Aorta (tissue), 5 donors: ENCODE measurements at regions of chr17 and their contacts with region 1.

Region 1: DNA sequence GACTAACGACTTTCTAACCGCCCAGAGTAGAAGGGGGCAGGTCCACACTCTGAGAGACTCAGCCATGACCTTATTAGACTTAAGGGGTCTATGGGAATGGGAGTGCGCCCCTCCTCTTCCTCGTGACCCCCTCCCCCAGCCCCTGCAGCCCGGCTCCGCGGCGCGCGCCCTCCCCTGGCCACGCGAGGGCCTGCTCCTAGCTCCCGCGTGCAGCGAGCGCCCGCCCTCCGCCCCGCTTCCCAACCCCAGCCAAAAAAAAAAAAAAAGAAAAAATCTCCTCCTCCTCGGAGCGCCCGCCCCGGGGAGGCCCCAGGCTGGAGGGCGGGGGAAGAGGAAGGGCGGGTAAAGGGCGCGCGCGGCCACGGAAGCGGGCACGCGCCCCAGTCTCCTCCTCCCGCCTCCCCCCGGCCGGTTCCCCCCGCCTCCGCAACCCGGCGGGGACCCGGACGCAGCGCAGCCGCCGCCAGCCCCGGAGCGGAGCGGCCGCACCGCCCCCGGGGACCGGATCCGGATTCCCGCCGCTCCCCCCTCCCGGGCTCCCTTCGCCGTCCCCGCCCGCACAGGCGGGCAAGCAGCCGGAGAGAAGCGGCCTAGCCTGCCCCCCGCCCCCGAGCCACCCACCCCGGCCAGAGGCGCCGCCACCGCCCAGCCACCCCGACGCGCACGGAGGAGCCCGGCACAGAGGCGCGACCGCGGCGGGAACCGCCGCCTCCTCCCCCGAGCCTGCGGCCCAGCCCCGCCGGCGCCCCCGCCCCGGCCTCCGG is 949 bp downstream of the UBTF start:
- DNase-seq: peak; percentile 92 to 96
- ATAC-seq: peak; percentile 89
- H3K4me3 ChIP-seq: peak overlapping the region; percentile 90 to 98
- H3K27ac ChIP-seq: peak overlapping the region; percentile 90 to 99
- H3K4me1 ChIP-seq: peaks cover 0 to 2% of the 10 kb centered on the region in 2 donors
- H3K27me3 ChIP-seq: no peaks in the 10 kb centered on the region

Region 2: GRCh38 chr17:44086364-44087311 is 131.9 kb before region 1 on chr17:
- intact Hi-C with region 1: no loop called
- DNase-seq: no peak
- ATAC-seq: no peak
- H3K4me3 ChIP-seq: no peak overlapping the region
- H3K27ac ChIP-seq: no peak overlapping the region
- H3K4me1 ChIP-seq: no peaks in the 10 kb centered on the region
- H3K27me3 ChIP-seq: no peaks in the 10 kb centered on the region

Region 3: GRCh38 chr17:44199553-44200477 is 18.7 kb before region 1 on chr17 and contains the start of gene ATXN7L3:
- intact Hi-C with region 1: loop called in 1 of 2 experiments (anchors 2 kb)
- DNase-seq: peak; percentile 99 to 100
- ATAC-seq: peak; percentile 96
- H3K4me3 ChIP-seq: peak within 1 kb of the TSS; percentile 92 to 99
- H3K27ac ChIP-seq: peak within 1 kb of the TSS; percentile 80 to 84
- H3K4me1 ChIP-seq: no peaks in the 10 kb centered on the region
- H3K27me3 ChIP-seq: no peaks in the 10 kb centered on the region
- total RNA-seq, gene ATXN7L3: 62.9 to 67.5 TPM

Region 4: DNA sequence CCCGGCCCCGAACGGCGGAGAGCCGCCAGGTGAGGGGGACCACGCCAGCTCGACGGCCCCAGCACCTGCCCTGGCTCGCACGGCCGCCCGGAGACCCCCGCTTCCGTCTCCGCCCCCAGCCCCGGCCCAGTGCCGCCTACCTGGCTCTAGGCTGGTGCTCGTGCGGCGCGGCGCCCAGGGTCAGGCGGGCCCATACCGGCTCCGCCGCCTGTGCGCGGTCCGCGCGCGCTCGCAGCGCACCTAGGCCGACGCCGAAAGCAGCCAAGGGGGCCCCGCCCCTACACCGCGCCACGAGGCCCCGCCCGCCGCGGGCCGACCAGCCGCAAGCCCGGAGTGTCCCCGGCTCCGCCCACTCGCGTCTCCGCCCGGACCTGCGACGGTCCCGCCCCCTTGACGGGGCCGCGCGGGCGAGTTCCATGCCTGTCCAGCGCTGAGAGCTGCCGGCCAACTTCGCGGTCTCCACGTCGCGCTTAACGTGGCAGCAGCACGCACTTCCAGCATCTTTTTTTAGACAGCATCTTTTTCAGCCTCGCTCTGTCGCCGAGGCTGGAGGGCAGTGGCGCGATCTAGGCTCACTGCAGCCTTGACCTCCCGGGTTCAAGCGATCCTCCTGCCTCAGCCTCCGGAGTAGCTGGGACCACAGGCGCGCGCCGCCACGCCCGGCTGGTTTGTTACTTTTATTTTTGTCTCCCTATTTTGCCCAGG is 106.2 kb after region 1 on chr17 and contains the start of gene SLC25A39:
- intact Hi-C with region 1: loop called in 1 of 2 experiments (anchors 1 kb)
- DNase-seq: peak; percentile 97 to 98
- ATAC-seq: peak; percentile 97
- H3K4me3 ChIP-seq: peak within 1 kb of the TSS; percentile 65 to 75
- H3K27ac ChIP-seq: peak within 1 kb of the TSS; percentile 9 to 89
- H3K4me1 ChIP-seq: no peaks in the 10 kb centered on the region
- H3K27me3 ChIP-seq: no peaks in the 10 kb centered on the region
- total RNA-seq, gene SLC25A39: 50.2 to 61.5 TPM

Region 5: GRCh38 chr17:44331249-44331760 is 112.8 kb after region 1 on chr17:
- intact Hi-C with region 1: loop called in 1 of 2 experiments (anchors 2 kb)
- DNase-seq: no peak
- ATAC-seq: no peak
- H3K4me3 ChIP-seq: no peak overlapping the region
- H3K27ac ChIP-seq: no peak overlapping the region
- H3K4me1 ChIP-seq: no peaks in the 10 kb centered on the region
- H3K27me3 ChIP-seq: no peaks in the 10 kb centered on the region

Region 6: DNA sequence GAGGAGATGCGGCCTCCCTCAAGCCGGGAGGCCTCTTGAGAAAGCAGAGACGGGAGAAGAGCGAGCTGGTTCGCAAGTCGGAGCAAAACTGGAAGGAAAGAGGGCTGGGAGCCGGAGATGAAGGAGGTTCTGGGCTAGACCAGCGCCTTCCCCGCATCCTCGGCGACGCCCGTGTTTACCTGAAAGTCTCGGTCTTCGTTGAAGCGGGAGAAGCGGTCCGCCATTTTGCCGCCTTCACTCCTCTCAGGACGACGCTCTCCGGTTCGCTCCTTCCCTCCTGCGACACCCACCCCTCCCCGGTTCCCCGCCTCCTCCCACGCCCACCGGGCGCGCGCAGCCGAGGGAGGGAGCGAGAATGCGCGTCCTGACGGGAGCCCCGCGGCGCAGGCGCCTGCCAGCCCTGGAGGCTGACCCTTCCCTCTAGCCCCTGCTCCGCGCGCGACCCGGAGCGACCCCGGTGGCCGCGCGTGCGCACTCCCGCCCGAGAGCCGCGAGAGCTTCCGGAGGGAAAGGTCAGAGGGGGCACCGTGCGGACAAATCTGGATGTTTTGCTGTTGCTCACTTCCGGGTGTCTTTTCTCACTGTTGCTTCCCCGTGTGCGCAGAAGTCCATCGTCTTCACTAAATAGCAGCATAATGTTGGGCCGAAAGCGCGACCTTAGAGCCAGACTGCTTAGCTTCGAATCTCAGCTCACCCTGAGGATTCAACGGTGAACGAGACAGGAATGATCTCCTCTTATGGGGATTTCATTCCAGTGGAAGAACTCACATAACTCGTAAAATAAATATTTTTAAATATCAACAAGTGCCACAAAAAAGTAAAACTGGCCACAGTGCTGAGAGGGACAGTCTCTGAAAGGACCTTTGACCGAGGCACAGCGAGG is 284.9 kb after region 1 on chr17 and contains the start of gene GPATCH8:
- intact Hi-C with region 1: loop called in 1 of 2 experiments (anchors 10 kb)
- DNase-seq: peak; percentile 97 to 98
- ATAC-seq: peak; percentile 100
- H3K4me3 ChIP-seq: peak within 1 kb of the TSS; percentile 83 to 99
- H3K27ac ChIP-seq: peak within 1 kb of the TSS; percentile 1 to 85
- H3K4me1 ChIP-seq: peaks cover 2 to 3% of the 10 kb centered on the region in 2 donors
- H3K27me3 ChIP-seq: no peaks in the 10 kb centered on the region
- total RNA-seq, gene GPATCH8: 42.7 to 56.5 TPM

Region 7: DNA sequence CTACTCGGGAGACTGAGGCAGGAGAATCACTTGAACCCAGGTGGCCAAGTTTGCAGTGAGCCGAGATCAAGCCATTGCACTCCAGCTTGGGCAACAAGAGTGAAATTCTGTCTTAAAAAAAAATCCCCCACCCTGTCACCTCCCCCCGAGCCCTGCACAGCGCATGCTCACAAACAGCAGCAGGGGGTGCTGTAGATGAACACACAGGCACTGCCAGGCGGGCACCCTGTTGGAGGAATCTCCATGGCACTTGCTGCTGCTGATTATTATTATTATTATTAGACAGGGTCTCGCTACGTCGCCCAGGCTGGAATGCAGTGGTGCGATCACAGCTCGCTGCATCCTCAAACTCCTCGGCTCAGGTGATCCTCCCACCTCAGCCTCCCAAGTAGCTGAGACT is 363.3 kb after region 1 on chr17:
- intact Hi-C with region 1: no loop called
- DNase-seq: peak in 1 of 2 donors; percentile 67
- ATAC-seq: no peak
- H3K4me3 ChIP-seq: no peak overlapping the region
- H3K27ac ChIP-seq: no peak overlapping the region
- H3K4me1 ChIP-seq: peaks cover 0 to 6% of the 10 kb centered on the region in 2 donors
- H3K27me3 ChIP-seq: no peaks in the 10 kb centered on the region